Sigmoid colon (tissue), 7 donors: ENCODE measurements at regions of chr15 and their contacts with region 1.

Region 1: DNA sequence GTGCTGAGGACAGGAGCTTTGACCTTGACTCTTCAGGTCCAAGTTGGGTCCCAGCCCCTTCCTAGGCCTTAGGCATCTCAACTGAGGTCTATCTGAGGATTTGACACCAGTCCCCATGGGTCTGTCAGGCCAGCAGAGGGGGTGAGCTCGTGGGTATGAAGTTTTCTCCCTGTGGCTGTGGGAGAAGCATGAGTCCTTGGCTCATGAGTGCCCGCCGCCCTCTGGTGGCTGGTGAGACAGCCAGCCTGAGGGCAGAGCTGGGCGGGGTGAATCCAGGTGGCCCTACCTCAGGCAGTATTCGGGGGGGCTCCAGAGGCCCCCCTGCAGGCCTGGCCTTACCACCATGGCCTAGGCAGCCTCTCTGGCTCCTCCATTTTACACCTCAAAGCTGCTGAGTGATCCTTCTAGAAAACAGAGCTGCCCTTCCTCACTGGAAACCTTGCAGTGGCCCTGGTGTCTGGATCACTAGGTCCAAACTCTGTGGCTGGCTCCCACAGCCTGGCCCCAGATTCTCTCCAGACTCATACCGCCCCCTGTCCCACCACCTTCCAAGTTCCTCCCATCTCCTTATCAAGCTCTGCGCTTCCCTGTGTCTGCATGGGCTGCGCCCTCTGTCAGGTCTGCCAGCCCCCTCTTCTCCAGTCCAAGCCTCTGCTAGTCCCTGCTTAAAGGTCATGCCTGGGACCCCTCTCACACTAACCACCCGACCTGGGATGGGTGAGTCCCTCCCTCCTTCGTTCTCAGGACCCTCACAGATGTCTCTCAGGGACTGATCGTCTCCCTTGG is 16.1 kb downstream of the SH2D7 start:
- DNase-seq: peak; percentile 92
- H3K4me3 ChIP-seq: no peak overlapping the region
- H3K27ac ChIP-seq: no peak overlapping the region
- H3K4me1 ChIP-seq: no peaks in the 10 kb centered on the region
- H3K27me3 ChIP-seq: no peaks in the 10 kb centered on the region
- CTCF ChIP-seq: peak; percentile 76 to 97 (median 91)
- EP300 ChIP-seq: no peak
- POLR2A ChIP-seq: no peak

Region 2: GRCh38 chr15:77966540-77967290 is 141.8 kb before region 1 on chr15:
- intact Hi-C with region 1: loop called (anchors 2 kb)
- DNase-seq: peak; percentile 74
- H3K4me3 ChIP-seq: no peak overlapping the region
- H3K27ac ChIP-seq: no peak overlapping the region
- H3K4me1 ChIP-seq: no peaks in the 10 kb centered on the region
- H3K27me3 ChIP-seq: no peaks in the 10 kb centered on the region
- CTCF ChIP-seq: peak; percentile 62 to 80 (median 74)
- EP300 ChIP-seq: no peak
- POLR2A ChIP-seq: no peak

Region 3: DNA sequence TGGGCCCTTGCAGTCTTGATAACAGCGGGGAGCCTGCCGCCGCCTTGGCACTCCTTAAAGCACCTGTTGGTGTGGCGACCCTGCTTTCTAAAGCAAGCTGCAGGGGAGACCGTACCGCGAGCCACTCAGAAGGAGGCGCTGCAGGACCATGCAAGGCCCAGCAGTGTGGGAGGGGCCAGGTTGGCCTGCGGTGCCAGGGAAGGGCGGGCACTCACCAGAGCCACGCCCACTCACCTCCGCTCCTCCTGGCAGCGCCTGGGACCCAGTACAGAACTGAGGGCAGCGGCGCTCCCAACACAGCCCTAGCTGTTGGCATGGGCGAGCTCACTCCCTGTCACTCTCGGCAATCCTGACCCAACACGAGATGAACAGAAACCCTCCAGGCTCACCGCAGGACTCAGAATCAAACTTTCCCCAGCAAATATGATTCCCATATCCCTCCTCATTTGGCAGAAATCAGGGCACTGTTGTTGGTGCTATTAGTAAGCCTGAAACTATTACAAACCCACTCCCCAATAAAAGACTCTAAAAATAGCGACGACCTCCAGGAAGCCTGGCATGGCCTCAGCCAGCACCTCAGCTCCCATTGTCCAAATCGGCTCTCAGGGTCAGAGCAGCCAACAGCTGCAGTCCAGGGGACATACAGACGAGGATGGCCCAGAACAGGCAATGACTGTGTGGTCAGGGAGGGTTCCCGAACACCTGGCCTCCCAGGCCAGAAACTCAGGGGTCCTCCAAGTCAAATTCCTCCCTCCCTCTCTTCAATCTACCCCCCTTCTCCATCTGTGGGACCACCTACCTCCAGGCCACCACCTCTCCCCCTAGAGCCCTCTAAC is 108.2 kb before region 1 on chr15:
- intact Hi-C with region 1: loop called (anchors 1 kb)
- DNase-seq: peak; percentile 88
- H3K4me3 ChIP-seq: no peak overlapping the region
- H3K27ac ChIP-seq: no peak overlapping the region
- H3K4me1 ChIP-seq: peaks cover 0 to 34% (median 27%) of the 10 kb centered on the region in 4 donors
- H3K27me3 ChIP-seq: no peaks in the 10 kb centered on the region
- CTCF ChIP-seq: peak; percentile 43 to 58 (median 49)
- EP300 ChIP-seq: no peak
- POLR2A ChIP-seq: no peak

Region 4: DNA sequence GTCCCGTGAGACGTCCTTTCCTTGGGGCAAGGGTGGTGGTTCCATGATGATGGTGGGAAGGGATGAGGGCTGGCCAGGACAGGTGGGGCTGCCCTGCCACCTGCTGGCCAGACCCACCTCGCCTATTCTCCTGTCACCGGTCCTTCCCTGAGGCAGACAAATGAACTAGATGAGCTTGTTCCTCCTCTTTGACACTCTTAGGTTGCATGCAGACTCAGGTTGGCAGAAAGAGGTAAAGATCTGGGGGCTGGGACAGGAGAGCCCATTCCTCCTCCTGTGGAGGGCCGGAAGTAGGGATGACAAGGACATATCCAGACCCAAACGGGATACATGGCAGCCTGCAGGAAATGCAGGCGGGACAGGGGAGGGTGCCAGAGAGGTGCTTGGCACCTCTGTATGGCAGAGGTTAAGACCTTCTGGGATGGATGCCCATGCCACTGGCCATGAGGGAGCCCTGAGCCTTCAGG is 87.3 kb after region 1 on chr15:
- intact Hi-C with region 1: loop called (anchors 10 kb)
- DNase-seq: no peak
- H3K4me3 ChIP-seq: no peak overlapping the region
- H3K27ac ChIP-seq: no peak overlapping the region
- H3K4me1 ChIP-seq: no peaks in the 10 kb centered on the region
- H3K27me3 ChIP-seq: no peaks in the 10 kb centered on the region
- CTCF ChIP-seq: peak in 3 of 4 experiments; percentile 32 to 56 (median 54)
- EP300 ChIP-seq: no peak
- POLR2A ChIP-seq: no peak

Region 5: GRCh38 chr15:78241007-78241406 is 132.5 kb after region 1 on chr15:
- intact Hi-C with region 1: loop called (anchors 1 kb)
- DNase-seq: peak; percentile 93
- H3K4me3 ChIP-seq: no peak overlapping the region
- H3K27ac ChIP-seq: no peak overlapping the region
- H3K4me1 ChIP-seq: peaks cover 0 to 11% (median 7%) of the 10 kb centered on the region in 4 donors
- H3K27me3 ChIP-seq: no peaks in the 10 kb centered on the region
- CTCF ChIP-seq: peak; percentile 75 to 83 (median 80)
- EP300 ChIP-seq: no peak
- POLR2A ChIP-seq: no peak

Region 6: GRCh38 chr15:78422571-78423340 is 314.3 kb after region 1 on chr15:
- intact Hi-C with region 1: loop called (anchors 5 kb)
- DNase-seq: peak; percentile 81
- H3K4me3 ChIP-seq: no peak overlapping the region
- H3K27ac ChIP-seq: no peak overlapping the region
- H3K4me1 ChIP-seq: peaks cover 0 to 4% (median 0%) of the 10 kb centered on the region in 4 donors
- H3K27me3 ChIP-seq: no peaks in the 10 kb centered on the region
- CTCF ChIP-seq: peak; percentile 83 to 92 (median 90)
- EP300 ChIP-seq: no peak
- POLR2A ChIP-seq: no peak